ENCODE measurements at regions of chr12 and their contacts with region 1.

Region 1: DNA sequence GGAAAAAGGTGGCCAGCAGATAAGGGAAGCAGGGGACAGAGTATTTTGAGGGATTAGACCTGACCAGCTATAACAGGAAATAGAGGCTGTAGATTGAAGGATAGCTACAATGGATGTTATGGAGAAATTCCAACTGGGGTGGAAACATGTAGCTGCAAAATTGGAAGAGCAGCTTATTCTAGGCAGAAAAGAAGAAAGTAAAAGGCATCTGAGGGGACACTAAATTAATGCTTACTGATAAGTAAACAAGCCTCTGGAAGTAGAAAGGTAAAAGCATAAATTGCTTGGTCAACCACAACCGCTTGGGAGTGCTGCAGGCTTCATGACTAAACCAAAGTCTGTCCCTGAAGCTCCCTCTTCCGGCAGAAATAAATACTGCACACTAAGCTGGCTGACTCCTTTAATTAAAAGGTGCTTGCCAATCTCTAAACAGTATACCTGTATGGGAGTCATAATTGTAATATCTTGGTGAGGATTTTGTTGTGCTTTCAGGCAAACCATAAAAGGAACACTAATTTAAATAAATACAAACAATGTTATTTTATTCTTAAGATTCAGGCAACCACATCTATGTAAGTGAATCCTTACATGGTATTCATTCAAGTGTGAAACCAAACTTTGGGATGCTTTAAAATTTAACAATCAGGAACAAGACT is 7.7 kb downstream of the UBC start:
- DNase-seq: peak; percentile 95
- H3K4me3 ChIP-seq: no peak overlapping the region
- H3K27ac ChIP-seq: no peak overlapping the region
- H3K4me1 ChIP-seq: peaks cover 22% of the 10 kb centered on the region
- H3K27me3 ChIP-seq: no peaks in the 10 kb centered on the region
- CTCF ChIP-seq: peak; percentile 90 to 97
- POLR2A ChIP-seq: peak; percentile 22

Region 2: GRCh38 chr12:124774462-124775167 is 132.1 kb before region 1 on chr12:
- CTCF ChIA-PET with region 1: interaction called, 3 read pairs
- POLR2A ChIA-PET with region 1: no interaction called
- dilution Hi-C with region 1: no loop called
- intact Hi-C with region 1: loop called (anchors 5 kb)
- DNase-seq: no peak
- H3K4me3 ChIP-seq: no peak overlapping the region
- H3K27ac ChIP-seq: no peak overlapping the region
- H3K4me1 ChIP-seq: peaks cover 9% of the 10 kb centered on the region
- H3K27me3 ChIP-seq: no peaks in the 10 kb centered on the region
- CTCF ChIP-seq: no peak
- POLR2A ChIP-seq: no peak

Region 3: GRCh38 chr12:124863416-124864325 is 43.1 kb before region 1 on chr12 and contains the start of gene SCARB1:
- CTCF ChIA-PET with region 1: interaction called, 11 read pairs
- POLR2A ChIA-PET with region 1: no interaction called
- dilution Hi-C with region 1: no loop called
- intact Hi-C with region 1: loop called (anchors 2 kb)
- DNase-seq: peak; percentile 71
- H3K4me3 ChIP-seq: peak within 1 kb of the TSS; percentile 16 to 73 (median 30)
- H3K27ac ChIP-seq: peak within 1 kb of the TSS; percentile 58
- H3K4me1 ChIP-seq: peaks cover 24% of the 10 kb centered on the region
- H3K27me3 ChIP-seq: no peaks in the 10 kb centered on the region
- CTCF ChIP-seq: peak in 1 of 2 donors; percentile 3
- POLR2A ChIP-seq: peak; percentile 82
- total RNA-seq, gene SCARB1: 125 TPM in 2 replicates

Region 4: DNA sequence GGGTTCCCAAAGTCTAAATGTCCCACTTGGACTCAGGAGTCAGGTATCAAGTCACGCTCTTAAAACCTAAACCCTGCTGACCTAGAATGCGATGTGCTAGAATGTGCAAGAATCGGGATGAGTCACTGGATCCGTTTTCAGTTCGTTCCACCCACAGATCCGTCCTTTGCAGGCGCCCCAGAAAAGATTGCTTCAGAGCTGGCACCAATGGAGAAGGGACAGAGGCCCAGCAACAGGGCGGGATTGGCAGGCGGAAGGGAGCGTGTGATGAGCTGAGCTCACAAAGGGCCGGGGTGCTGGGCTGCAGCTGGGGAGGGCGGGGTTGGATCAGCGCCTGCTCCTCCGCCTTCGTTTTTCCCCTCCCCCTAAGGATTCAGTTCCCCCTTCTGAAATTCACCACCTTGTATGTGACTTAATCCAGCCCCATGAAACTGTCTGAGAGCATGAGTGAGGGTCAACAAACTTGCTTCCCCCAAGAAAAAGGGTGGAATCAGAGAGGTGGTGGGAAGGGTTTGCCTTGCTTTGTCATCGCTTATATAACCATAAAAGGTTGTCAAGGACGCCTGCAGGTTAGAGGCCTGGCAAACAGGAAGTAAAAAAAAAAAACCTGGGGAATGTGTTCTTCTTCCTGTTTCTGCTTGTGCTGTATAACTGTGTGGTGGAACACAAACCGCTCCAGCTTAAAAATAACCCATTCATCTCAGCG is 10.6 kb after region 1 on chr12:
- CTCF ChIA-PET with region 1: interaction called, 29 read pairs
- POLR2A ChIA-PET with region 1: interaction called, 10 read pairs
- dilution Hi-C with region 1: no loop called
- intact Hi-C with region 1: no loop called
- DNase-seq: peak; percentile 100
- H3K4me3 ChIP-seq: peak overlapping the region; percentile 7 to 63 (median 21)
- H3K27ac ChIP-seq: peak overlapping the region; percentile 95
- H3K4me1 ChIP-seq: peaks cover 58% of the 10 kb centered on the region
- H3K27me3 ChIP-seq: no peaks in the 10 kb centered on the region
- CTCF ChIP-seq: no peak
- POLR2A ChIP-seq: no peak

Region 5: DNA sequence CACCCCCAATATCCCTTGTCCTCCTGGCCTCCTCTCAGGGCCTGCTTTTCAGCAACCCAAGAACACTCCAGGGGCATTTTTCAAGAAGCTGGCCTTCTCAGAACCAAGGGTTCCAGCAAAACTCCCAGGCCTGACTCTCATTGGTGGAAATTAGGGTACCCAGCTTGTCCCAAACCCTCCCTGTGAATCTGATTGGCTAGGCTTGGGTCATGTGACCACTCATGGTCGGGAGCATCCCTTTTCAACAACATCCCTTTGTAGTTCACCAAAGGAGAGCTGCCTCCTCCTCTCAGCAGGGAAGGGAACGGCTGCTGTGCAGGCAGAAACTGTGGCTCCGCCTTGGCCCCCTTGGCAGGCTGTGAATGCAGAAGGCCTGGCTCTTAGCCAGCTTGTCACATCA is 252.9 kb after region 1 on chr12:
- CTCF ChIA-PET with region 1: no interaction called
- POLR2A ChIA-PET with region 1: no interaction called
- dilution Hi-C with region 1: no loop called
- intact Hi-C with region 1: no loop called
- DNase-seq: no peak
- H3K4me3 ChIP-seq: no peak overlapping the region
- H3K27ac ChIP-seq: no peak overlapping the region
- H3K4me1 ChIP-seq: no peaks in the 10 kb centered on the region
- H3K27me3 ChIP-seq: no peaks in the 10 kb centered on the region
- CTCF ChIP-seq: no peak
- POLR2A ChIP-seq: no peak